Cardiac septum (tissue), 1 donor: ENCODE measurements at regions of chr3 and their contacts with region 1.

Region 1: GRCh38 chr3:194134757-194135528 is 1.0 kb upstream of the HES1 start:
- DNase-seq: peak; percentile 93

Region 2: GRCh38 chr3:193780810-193781472 is 354.0 kb before region 1 on chr3:
- intact Hi-C with region 1: loop called (anchors 2 kb)
- DNase-seq: peak; percentile 82

Region 3: DNA sequence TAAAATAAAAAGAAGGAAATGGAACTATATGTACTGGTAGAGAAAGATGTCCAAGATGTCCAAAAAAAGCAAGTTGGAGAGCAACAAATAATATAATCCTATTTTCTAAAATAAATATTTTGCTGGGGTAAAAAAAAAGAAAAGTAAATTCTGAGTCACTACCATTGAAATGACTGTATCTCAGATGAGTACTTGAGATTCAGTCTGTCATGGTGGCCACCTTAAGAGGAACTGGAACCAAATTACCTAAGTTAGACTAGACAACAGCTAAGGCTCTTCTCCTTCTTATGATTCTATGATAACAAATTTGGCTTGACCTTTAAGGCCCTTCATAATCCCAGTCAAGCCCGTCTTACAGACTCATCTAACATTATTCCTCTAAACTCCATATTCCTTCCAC is 269.6 kb before region 1 on chr3:
- intact Hi-C with region 1: loop called (anchors 2 kb)
- DNase-seq: no peak

Region 4: DNA sequence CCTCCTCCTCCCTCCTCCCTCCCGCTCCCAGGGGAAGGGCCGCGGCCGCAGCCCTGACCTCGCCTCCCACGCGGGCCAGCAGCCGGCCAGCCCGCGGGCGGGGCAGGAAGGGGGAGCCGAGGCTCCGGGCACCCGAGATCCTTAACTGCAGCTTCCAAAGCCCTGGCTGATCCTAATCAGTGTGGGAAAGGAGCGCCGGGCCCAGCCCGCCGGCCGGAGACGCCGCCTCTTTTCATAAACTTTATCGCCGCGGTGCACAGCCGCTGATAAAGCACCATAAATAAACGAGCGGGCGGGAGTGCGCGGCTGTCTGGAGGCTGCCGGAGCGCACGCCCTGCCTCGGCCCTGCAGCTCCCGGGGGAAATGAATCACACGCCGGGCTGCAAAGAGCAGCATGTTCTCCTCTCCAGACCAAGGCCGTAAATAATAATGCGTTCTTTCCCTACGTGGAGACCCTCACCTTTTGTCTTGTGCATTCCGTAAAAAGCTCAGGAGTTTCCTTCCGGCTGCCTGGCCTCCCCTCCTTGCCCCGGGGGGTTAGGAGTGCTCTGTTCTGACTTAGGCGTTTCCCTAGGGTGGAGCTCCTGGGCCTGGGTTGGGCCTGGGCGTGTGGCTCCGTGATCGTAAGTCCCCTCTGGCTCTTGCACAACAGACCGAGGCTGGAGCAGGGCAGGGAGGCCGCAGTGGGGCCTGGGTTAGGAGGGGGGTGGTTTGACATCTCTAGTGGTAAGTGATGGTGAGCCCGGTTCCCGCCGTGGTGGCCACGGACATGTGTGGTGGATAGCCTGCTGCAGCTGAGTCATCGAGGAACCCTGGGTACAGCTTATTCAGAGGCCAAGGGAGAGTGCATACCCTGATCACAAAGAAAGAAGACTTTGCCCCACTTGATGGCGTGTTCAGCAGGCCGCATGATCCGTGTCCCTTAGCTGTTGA is 131.6 kb before region 1 on chr3:
- intact Hi-C with region 1: loop called (anchors 1 kb)
- DNase-seq: peak; percentile 94

Region 5: GRCh38 chr3:194089357-194090177 is 45.4 kb before region 1 on chr3:
- intact Hi-C with region 1: no loop called
- DNase-seq: peak; percentile 93

Region 6: DNA sequence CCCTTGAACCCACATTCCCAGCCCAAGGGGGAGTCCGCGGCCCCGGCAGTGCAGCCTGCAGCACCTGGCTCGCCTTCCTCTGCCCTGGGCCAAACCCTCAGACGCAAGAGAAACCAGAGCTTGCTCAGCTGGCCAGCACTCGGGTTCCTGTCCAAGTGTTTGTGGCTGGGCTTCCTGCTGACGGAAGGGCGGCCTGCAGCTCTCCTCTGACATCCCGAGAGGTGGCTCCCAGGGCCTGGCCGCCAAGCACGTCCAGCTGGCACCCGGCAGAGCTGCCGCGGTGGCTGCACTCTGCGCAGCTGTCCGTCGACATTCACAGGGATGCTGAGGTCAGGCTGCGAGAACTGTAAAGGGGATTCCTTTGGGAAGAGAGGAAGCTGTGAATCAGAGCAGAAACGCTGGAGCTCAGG is 130.5 kb after region 1 on chr3:
- intact Hi-C with region 1: loop called (anchors 2 kb)
- DNase-seq: peak; percentile 93

Region 7: GRCh38 chr3:194353956-194354714 is 219.2 kb after region 1 on chr3:
- intact Hi-C with region 1: no loop called
- DNase-seq: no peak

Region 8: GRCh38 chr3:194532591-194532990 is 397.6 kb after region 1 on chr3:
- intact Hi-C with region 1: no loop called
- DNase-seq: no peak